IMR-90 (cell line): ENCODE measurements at regions of chr10 and their contacts with region 1.

Region 1: GRCh38 chr10:24983946-24984345 is 31.5 kb upstream of the PRTFDC1 start:
- DNase-seq: no peak
- ATAC-seq: no peak
- H3K4me3 ChIP-seq: no peak overlapping the region
- H3K27ac ChIP-seq: no peak overlapping the region
- H3K4me1 ChIP-seq: no peaks in the 10 kb centered on the region
- H3K27me3 ChIP-seq: no peaks in the 10 kb centered on the region
- CTCF ChIP-seq: no peak
- POLR2A ChIP-seq: no peak
- RAD21 ChIP-seq: no peak

Region 2: DNA sequence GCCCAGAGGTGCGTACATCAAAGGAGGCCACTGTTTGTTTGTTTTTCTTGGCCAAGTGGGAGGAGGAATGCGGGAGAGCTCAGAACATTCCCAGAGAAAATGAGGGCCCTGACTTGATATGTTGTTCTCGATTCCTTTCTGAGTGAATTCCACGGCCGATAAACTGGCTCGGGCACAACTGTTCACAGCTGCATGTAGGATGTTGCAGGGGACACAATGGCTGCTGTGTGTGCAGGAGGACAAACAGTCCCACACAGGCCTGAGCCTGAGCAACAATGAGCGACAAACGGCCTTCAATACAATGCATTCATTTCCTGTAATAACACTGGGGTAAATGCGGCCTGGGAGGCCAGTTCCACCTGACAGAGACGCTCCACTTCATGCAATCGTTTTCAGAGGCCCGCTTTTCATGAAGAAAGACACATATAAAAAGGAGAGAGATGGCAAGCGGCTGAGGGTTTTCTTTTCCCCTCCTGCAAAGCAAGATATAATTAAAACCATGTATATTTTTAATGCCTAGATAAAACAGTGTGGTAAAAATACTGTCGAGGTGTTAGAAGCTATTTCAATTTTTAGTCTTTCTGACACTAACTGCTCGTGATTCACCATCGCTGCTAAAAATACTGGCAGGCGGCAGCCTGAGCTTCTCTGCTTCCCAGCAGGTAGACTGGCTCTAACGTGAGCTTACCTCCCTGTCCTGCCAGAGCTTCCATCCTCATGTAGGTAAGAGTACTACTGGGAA is 171.9 kb before region 1 on chr10:
- CTCF ChIA-PET with region 1: no interaction called
- POLR2A ChIA-PET with region 1: no interaction called
- dilution Hi-C with region 1: no loop called
- in situ Hi-C with region 1: no loop called
- intact Hi-C with region 1: no loop called
- DNase-seq: no peak
- ATAC-seq: no peak
- H3K4me3 ChIP-seq: no peak overlapping the region
- H3K27ac ChIP-seq: no peak overlapping the region
- H3K4me1 ChIP-seq: no peaks in the 10 kb centered on the region
- H3K27me3 ChIP-seq: no peaks in the 10 kb centered on the region
- CTCF ChIP-seq: no peak
- POLR2A ChIP-seq: no peak
- RAD21 ChIP-seq: no peak

Region 3: GRCh38 chr10:24995072-24995471 is 11.1 kb after region 1 on chr10:
- CTCF ChIA-PET with region 1: no interaction called
- POLR2A ChIA-PET with region 1: interaction called, 14 read pairs
- dilution Hi-C with region 1: no loop called
- in situ Hi-C with region 1: no loop called
- intact Hi-C with region 1: no loop called
- DNase-seq: no peak
- ATAC-seq: no peak
- H3K4me3 ChIP-seq: no peak overlapping the region
- H3K27ac ChIP-seq: no peak overlapping the region
- H3K4me1 ChIP-seq: no peaks in the 10 kb centered on the region
- H3K27me3 ChIP-seq: no peaks in the 10 kb centered on the region; the same call in 1 of the 2 replicates
- CTCF ChIP-seq: no peak
- POLR2A ChIP-seq: no peak
- RAD21 ChIP-seq: no peak

Region 4: GRCh38 chr10:25026463-25026862 is 42.5 kb after region 1 on chr10:
- CTCF ChIA-PET with region 1: no interaction called
- POLR2A ChIA-PET with region 1: no interaction called
- dilution Hi-C with region 1: no loop called
- in situ Hi-C with region 1: no loop called
- intact Hi-C with region 1: no loop called
- DNase-seq: peak; percentile 10
- ATAC-seq: no peak
- H3K4me3 ChIP-seq: no peak overlapping the region
- H3K27ac ChIP-seq: no peak overlapping the region
- H3K4me1 ChIP-seq: no peaks in the 10 kb centered on the region
- H3K27me3 ChIP-seq: no peaks in the 10 kb centered on the region
- CTCF ChIP-seq: no peak
- POLR2A ChIP-seq: no peak
- RAD21 ChIP-seq: no peak

Region 5: DNA sequence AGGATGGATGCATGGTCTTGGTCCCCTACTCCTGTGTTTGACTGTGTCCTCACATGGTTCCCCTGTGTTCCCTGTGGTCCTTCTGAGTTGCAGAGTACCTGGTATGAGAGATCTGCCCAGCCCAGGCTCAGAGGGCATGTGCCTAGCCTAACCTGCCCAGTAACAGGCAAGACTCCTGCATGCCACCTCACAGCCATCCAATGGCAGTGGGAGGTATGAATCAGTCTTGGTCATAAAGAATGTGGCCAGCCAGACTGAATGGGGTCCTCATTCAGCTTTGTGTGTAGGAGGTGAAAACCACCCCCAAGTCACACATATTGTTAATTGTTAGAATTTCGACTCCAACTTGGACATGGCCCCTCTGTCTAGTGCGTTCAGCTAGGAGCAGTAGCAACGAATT is 173.7 kb after region 1 on chr10:
- CTCF ChIA-PET with region 1: no interaction called
- POLR2A ChIA-PET with region 1: no interaction called
- dilution Hi-C with region 1: no loop called
- in situ Hi-C with region 1: no loop called
- intact Hi-C with region 1: no loop called
- DNase-seq: no peak
- ATAC-seq: no peak
- H3K4me3 ChIP-seq: no peak overlapping the region
- H3K27ac ChIP-seq: no peak overlapping the region
- H3K4me1 ChIP-seq: no peaks in the 10 kb centered on the region
- H3K27me3 ChIP-seq: no peaks in the 10 kb centered on the region
- CTCF ChIP-seq: no peak
- POLR2A ChIP-seq: no peak
- RAD21 ChIP-seq: no peak